ENCODE measurements at regions of chr5 and their contacts with region 1.

Region 1: DNA sequence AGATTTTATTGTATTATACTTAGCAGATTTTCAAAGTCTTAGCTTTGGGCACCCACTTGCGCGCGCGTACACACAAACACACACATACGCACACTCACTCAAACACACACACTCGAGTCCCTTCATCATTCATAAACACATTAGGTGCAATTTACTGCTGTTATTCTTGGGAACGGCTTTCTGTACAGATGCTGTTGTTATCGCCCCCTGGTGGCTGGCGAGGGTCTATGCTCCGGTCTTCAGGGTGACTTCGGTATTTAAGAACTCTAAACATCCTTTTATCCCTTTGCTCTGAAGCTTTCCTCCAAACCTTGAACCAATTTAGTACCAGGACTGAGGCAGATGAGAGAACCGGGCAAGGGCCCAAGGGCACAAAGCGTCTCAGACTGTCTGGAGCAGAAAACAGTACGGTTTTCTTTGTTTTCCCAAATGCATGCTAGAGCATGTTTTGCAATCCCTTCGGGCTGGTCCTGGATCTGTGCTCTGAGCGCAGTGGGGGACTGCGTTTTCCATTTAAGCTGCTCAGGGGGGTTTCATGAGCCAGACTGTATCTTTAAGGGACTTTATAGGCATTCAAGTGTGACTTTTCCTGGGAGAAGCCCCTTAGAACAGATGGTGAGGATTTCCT is 1.7 kb upstream of the SLIT3 start:
- DNase-seq: peak; percentile 41 to 86
- H3K4me3 ChIP-seq: peak overlapping the region in 1 of 2 donors; percentile 88
- H3K27ac ChIP-seq: peak overlapping the region in 1 of 2 donors; percentile 80
- H3K4me1 ChIP-seq: peaks cover 0 to 19% of the 10 kb centered on the region in 2 donors
- H3K27me3 ChIP-seq: no peaks in the 10 kb centered on the region
- CTCF ChIP-seq: peak; percentile 77 to 95 (median 89)

Region 2: DNA sequence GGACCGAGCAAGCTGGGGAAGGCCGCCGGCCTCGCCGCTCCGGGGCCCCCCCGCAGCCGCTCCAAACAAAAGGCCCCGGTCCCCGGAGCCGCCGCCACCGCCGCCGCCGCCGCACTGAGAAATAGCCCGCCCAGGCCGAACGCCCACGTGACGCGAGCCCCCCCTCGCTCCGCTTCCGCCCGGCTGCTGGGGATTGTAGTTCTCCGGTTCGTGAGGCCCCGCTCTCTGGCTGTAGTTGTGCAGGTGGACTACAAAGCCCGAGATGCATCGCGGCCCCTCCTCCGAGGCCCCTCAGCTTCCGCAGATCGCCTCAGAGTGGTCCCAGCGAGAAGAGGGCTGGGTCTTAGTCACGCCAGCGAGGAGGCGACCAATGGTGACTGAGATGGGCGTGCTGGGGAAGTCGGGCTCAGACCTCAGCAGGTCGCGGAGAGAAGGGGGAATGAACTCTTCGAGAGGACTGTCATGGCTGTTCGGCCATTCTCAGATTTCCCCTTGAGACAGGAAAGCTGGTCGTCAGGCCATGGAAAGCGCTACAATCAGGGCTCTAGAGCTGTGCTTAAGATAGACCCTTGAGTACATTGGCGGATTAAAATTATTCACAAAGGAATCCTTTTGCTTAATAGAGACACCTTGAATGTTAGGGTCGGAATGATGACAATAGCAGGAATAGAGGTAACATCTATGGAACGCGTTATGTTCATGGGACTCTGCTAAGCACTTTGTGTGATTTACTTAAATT is 722.9 kb before region 1 on chr5:
- intact Hi-C with region 1: loop called (anchors 2 kb)
- DNase-seq: peak; percentile 97 to 99
- H3K4me3 ChIP-seq: peak overlapping the region; percentile 81 to 85
- H3K27ac ChIP-seq: peak overlapping the region; percentile 95 to 98
- H3K4me1 ChIP-seq: peaks cover 4 to 14% of the 10 kb centered on the region in 2 donors
- H3K27me3 ChIP-seq: no peaks in the 10 kb centered on the region
- CTCF ChIP-seq: no peak

Region 3: DNA sequence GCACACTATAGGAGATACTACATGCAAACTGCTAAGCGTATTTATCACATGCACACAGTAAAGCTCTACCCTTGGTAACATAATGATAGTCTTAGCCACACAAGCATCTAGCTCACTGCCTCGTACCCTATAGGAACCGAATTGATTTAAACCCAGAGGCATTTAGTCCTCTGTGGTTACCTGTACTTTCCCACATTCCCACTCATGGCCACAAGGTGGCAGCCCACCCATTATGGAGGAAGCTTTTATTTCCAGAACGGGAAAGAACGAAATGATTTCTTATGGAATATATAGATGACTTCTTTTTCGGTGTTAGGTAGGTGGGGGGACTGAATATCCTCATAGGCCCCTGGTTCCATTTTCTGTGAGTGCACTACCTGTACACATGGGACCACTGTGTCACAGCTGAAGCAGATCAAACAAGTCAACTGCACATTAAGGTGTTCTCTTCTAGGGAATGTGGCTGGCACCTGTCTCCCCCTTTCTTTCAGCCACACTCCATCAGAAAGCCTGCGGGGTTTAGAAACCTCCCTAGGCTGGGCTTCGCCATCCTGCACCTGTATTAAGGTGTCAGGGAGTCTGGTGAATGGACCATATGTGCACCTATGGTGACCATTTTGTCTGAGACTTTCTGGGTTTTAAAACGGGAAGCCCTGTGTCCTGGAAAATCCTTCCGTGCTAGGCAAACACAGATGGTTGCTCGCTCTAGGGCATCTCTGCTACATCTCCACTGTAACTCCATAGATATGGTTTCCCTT is 314.9 kb before region 1 on chr5:
- intact Hi-C with region 1: loop called (anchors 1 kb)
- DNase-seq: peak in 1 of 2 donors; percentile 86
- H3K4me3 ChIP-seq: peak overlapping the region in 1 of 2 donors; percentile 25
- H3K27ac ChIP-seq: no peak overlapping the region
- H3K4me1 ChIP-seq: peaks cover 3 to 12% of the 10 kb centered on the region in 2 donors
- H3K27me3 ChIP-seq: no peaks in the 10 kb centered on the region
- CTCF ChIP-seq: peak; percentile 78 to 94 (median 88)

Region 4: GRCh38 chr5:169142264-169142970 is 160.2 kb before region 1 on chr5:
- intact Hi-C with region 1: loop called (anchors 5 kb)
- DNase-seq: peak in 1 of 2 donors; percentile 78
- H3K4me3 ChIP-seq: no peak overlapping the region
- H3K27ac ChIP-seq: peak overlapping the region; percentile 37 to 54
- H3K4me1 ChIP-seq: peaks cover 0 to 22% of the 10 kb centered on the region in 2 donors
- H3K27me3 ChIP-seq: no peaks in the 10 kb centered on the region
- CTCF ChIP-seq: no peak

Region 5: GRCh38 chr5:169197343-169197742 is 105.3 kb before region 1 on chr5:
- intact Hi-C with region 1: loop called (anchors 5 kb)
- DNase-seq: no peak
- H3K4me3 ChIP-seq: peak overlapping the region in 1 of 2 donors; percentile 42
- H3K27ac ChIP-seq: peak overlapping the region; percentile 56 to 77
- H3K4me1 ChIP-seq: peaks cover 6 to 14% of the 10 kb centered on the region in 2 donors
- H3K27me3 ChIP-seq: no peaks in the 10 kb centered on the region
- CTCF ChIP-seq: peak in 2 of 3 experiments; percentile 8 to 67

Region 6: DNA sequence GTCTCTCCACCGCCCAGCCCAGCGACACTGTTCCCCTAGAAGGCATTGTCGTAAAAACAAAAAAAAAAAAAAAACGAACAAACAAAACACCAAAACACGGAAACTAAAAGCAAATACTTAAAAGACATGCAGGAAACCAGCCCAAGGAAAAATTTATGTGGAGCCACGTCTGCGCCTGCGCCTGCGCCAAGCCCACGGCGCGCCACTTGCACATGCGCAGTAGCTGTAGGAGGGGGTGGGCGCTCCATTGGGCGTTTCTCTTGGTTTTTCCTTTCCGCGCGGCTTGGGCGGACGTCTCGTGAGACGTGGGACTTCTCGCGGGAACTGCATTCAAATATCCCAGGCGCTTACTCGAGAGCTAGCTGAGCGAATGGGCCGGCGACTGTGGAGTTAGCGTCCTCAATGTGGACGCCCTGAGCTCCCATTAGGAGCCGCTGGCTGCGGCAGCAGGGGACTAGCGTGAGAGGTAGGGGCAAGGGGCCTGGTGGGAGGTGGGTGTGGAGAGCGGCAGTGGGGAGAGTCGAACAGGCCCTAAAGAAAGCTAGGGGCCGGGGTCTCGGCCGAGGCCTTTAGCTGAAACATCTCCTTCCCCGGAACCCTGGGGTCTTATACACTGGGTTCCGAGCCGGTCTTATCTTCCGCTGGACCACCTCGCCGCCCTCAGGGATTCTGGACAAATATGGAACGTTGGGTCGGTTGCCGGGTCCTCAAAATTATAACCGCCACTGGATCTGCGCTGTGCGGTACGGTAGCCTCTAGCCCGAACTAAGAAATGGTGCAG is 281.0 kb after region 1 on chr5 and contains the start of gene SPDL1:
- intact Hi-C with region 1: loop called (anchors 5 kb)
- DNase-seq: peak; percentile 83 to 97
- H3K4me3 ChIP-seq: peak within 1 kb of the TSS; percentile 51 to 97
- H3K27ac ChIP-seq: peak within 1 kb of the TSS; percentile 54 to 74
- H3K4me1 ChIP-seq: no peaks in the 10 kb centered on the region
- H3K27me3 ChIP-seq: no peaks in the 10 kb centered on the region
- CTCF ChIP-seq: no peak
- total RNA-seq, gene SPDL1: 5.5 TPM